ENCODE measurements at regions of chr4 and their contacts with region 1.

Region 1: GRCh38 chr4:185005216-185005819 is 13.0 kb upstream of the HELT start:
- DNase-seq: peak; percentile 79
- H3K4me3 Mint-ChIP-seq: no peak overlapping the region
- H3K27ac Mint-ChIP-seq: no peak overlapping the region
- H3K4me1 Mint-ChIP-seq: peaks cover 5% of the 10 kb centered on the region
- H3K27me3 Mint-ChIP-seq: peaks cover 62% of the 10 kb centered on the region

Region 2: DNA sequence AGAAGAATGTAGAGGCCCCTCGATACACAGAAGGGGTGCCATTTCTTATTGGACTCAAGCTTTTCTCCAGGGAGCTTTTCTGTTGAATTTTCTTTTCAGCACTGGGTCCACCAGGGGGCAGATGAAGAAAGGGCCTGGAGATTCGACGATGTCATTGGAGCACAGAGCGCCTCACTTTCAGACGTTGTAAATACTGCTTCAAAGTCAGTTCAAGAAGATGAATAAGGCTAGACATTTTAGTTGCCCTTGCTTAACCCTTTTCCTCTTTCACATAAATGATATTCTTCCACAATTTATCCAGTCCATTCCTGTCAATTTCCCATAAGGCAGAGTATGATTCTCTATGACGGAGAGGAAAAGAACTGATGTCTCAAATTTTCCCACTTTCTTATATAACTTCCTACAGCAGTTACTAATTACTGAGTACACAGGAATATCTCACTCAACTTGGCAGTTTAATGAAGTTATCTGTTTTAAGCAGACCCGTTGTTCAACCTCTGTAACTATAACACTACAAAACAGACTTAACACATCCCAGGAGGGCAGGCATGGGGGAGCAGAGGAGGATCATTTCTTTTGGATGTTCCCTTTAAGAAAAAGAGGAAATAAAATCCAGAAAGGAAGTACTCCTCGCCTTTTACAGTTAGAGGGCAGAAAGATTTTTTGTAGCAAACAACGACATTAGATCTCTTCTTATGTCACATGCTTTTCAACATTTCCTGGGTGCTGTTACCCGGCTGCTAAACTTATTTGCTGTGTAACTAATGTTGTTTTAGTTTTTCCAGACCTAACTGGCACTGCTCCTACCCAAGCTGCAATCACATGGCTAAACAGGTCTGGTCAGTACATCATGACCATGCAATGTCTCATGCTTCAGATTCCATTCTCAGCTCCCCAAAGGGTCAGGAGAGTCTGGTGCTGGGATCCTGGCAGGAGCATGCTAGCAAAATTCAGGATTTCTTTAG is 259.2 kb before region 1 on chr4:
- CTCF ChIA-PET with region 1: interaction called, 14 read pairs
- POLR2A ChIA-PET with region 1: no interaction called
- DNase-seq: peak; percentile 71
- H3K4me3 Mint-ChIP-seq: no peak overlapping the region
- H3K27ac Mint-ChIP-seq: no peak overlapping the region
- H3K4me1 Mint-ChIP-seq: peaks cover 5% of the 10 kb centered on the region
- H3K27me3 Mint-ChIP-seq: no peaks in the 10 kb centered on the region

Region 3: GRCh38 chr4:184988611-184989010 is 16.7 kb before region 1 on chr4:
- CTCF ChIA-PET with region 1: no interaction called
- POLR2A ChIA-PET with region 1: no interaction called
- DNase-seq: no peak
- H3K4me3 Mint-ChIP-seq: no peak overlapping the region
- H3K27ac Mint-ChIP-seq: no peak overlapping the region
- H3K4me1 Mint-ChIP-seq: no peaks in the 10 kb centered on the region
- H3K27me3 Mint-ChIP-seq: peaks cover 5% of the 10 kb centered on the region

Measured in activated CD4-positive, alpha-beta memory T cell treated with anti-CD3 and anti-CD28 coated beads, Interleukin-2, amount 10 ng/mL, durations not matched to agents 7 days and 5 days (primary cell).